ENCODE measurements at regions of chr1 and their contacts with region 1.

Region 1: GRCh38 chr1:19153169-19153568 is 56.9 kb downstream of the UBR4 start:
- DNase-seq: no peak
- H3K4me3 ChIP-seq: no peak overlapping the region
- H3K27ac ChIP-seq: no peak overlapping the region
- H3K4me1 ChIP-seq: no peaks in the 10 kb centered on the region
- H3K27me3 ChIP-seq: no peaks in the 10 kb centered on the region
- CTCF ChIP-seq: peak in 2 of 3 experiments; percentile 52 to 56; a peak in 2 of 4 replicates
- EP300 ChIP-seq: no peak
- POLR2A ChIP-seq: no peak
- RAD21 ChIP-seq: no peak

Region 2: DNA sequence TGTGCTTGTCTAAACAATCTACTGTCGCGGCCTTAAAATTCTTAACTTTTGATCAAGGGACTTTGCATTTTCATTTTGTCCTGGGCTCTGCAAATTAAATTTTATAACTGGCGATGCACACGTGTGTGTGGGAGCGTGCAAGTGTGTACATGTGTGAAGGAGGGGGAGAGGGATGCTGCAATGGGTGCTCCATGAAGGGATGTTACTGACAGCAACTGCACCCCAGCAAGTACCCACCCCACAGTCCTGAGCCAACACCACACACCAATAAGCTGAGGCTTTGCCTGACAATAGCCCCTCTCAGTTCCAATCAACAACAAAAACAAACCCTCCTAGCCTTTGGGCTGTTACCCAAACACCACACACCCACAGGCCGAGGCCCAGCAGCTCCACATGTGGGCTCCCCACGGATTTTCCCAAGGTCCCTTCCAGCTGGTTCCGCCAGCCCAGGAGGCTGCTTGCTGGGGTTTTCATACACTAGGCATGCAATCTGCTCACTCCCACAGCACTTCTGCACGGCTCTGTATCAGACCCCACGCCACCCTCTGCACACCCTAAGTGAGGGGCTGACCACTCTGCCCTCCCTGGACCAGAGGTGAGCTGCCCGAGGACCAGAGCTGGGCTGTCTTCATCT is 163.9 kb before region 1 on chr1:
- CTCF ChIA-PET with region 1: no interaction called
- POLR2A ChIA-PET with region 1: no interaction called
- DNase-seq: no peak
- H3K4me3 ChIP-seq: no peak overlapping the region
- H3K27ac ChIP-seq: no peak overlapping the region
- H3K4me1 ChIP-seq: peaks cover 0 to 11% (median 2%) of the 10 kb centered on the region in 4 experiments; a peak in 2 of 7 replicates
- H3K27me3 ChIP-seq: no peaks in the 10 kb centered on the region
- CTCF ChIP-seq: no peak
- EP300 ChIP-seq: no peak
- POLR2A ChIP-seq: no peak
- RAD21 ChIP-seq: no peak

Region 3: GRCh38 chr1:19139711-19140110 is 13.5 kb before region 1 on chr1:
- CTCF ChIA-PET with region 1: interaction called, 13 read pairs
- POLR2A ChIA-PET with region 1: interaction called, 3 read pairs
- DNase-seq: no peak
- H3K4me3 ChIP-seq: no peak overlapping the region
- H3K27ac ChIP-seq: no peak overlapping the region
- H3K4me1 ChIP-seq: 0 out of 7 replicates have a peak, but pooled peaks cover 0 to 6% (median 0%) of the 10 kb centered on the region in 4 experiments
- H3K27me3 ChIP-seq: no peaks in the 10 kb centered on the region
- CTCF ChIP-seq: no peak
- EP300 ChIP-seq: no peak
- POLR2A ChIP-seq: no peak
- RAD21 ChIP-seq: no peak

Region 4: DNA sequence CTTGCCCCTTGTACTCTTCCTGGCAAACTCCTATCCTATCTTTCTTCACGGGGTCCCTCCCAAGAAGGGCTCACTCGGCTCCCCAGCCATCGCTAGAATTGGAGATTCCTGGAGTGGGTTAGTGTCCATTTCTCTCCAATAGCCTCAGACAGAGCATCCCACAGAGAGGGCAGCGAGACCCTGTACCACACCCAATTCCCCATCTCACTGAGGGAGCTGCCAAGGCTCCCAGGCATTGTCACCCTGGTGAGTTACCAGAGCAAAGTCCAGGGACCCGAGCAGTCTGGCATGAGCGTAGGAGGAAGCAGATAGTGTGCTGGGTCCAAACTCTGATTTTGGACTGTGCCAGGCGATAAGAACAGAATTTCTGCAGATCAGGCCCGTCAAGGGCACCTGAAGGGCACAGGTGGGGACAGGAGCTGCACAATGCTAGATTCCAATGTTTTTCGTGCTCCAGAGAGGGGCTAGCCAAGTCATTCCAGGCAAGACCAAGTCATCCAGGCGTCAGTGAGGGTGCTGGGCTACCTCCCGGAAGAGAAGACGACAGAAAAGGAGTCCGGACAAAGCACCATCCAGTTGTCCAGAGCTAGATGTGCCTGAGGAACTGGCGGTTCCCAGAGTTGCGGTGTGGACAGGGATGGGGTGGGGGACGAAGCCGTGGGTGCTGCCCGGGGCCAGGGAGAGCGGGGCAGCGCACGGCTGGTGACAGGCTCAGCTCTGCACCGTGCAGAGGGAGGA is 120.1 kb after region 1 on chr1:
- CTCF ChIA-PET with region 1: no interaction called
- POLR2A ChIA-PET with region 1: no interaction called
- DNase-seq: no peak
- H3K4me3 ChIP-seq: no peak overlapping the region
- H3K27ac ChIP-seq: no peak overlapping the region
- H3K4me1 ChIP-seq: no peaks in the 10 kb centered on the region
- H3K27me3 ChIP-seq: peaks cover 0 to 3% (median 1%) of the 10 kb centered on the region in 4 experiments; a peak in 1 of 7 replicates
- CTCF ChIP-seq: no peak
- EP300 ChIP-seq: no peak
- POLR2A ChIP-seq: no peak
- RAD21 ChIP-seq: no peak

Measured in H1 (cell line).